ENCODE measurements at regions of chr4 and their contacts with region 1.

Region 1: DNA sequence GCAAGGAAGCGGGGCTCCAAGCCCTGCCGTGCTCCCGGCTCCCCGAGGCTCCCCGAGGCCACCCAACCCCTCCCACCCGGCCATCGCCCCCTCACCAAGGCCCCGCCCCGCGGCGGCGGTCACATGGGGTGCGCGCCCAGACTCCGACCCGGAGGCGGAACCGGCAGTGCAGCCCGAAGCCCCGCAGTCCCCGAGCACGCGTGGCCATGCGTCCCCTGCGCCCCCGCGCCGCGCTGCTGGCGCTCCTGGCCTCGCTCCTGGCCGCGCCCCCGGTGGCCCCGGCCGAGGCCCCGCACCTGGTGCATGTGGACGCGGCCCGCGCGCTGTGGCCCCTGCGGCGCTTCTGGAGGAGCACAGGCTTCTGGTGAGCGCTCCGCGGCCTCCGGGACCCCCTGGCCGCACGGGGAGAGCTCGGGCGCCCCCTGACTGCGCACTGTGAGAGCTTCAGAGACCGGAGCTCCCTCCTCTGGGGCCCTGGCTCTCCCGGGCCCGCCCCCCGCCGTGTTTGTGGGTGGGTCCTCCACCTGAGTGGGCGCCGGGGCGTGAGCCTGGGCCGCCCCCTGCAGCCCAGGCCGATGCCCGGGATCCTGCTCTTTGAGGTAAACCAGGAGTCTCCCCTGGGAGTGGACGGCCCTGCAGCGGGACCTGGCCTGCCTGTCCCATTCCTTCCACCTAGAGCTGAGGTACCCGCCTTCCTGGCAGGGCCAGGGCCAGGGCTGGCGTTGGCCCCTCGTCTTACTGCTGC is at the start of gene IDUA:
- DNase-seq: peak; percentile 92
- H3K4me3 Mint-ChIP-seq: peak within 1 kb of the TSS; percentile 83
- H3K27ac Mint-ChIP-seq: peak within 1 kb of the TSS; percentile 87
- H3K4me1 Mint-ChIP-seq: peaks cover 29% of the 10 kb centered on the region
- H3K27me3 Mint-ChIP-seq: no peaks in the 10 kb centered on the region

Region 2: GRCh38 chr4:742742-743311 is 244.2 kb before region 1 on chr4:
- CTCF ChIA-PET with region 1: interaction called, 18 read pairs
- DNase-seq: peak; percentile 83
- H3K4me3 Mint-ChIP-seq: no peak overlapping the region
- H3K27ac Mint-ChIP-seq: no peak overlapping the region
- H3K4me1 Mint-ChIP-seq: peaks cover 4% of the 10 kb centered on the region
- H3K27me3 Mint-ChIP-seq: no peaks in the 10 kb centered on the region

Region 3: GRCh38 chr4:973431-974397 is 13.3 kb before region 1 on chr4 and contains the start of gene DGKQ:
- CTCF ChIA-PET with region 1: no interaction called
- DNase-seq: peak; percentile 88
- H3K4me3 Mint-ChIP-seq: peak within 1 kb of the TSS; percentile 53
- H3K27ac Mint-ChIP-seq: no peak within 1 kb of the TSS
- H3K4me1 Mint-ChIP-seq: peaks cover 15% of the 10 kb centered on the region
- H3K27me3 Mint-ChIP-seq: peaks cover 10% of the 10 kb centered on the region

Measured in activated naive CD4-positive, alpha-beta T cell treated with anti-CD3 and anti-CD28 coated beads, Interleukin-2, amount 10 ng/mL, durations not matched to agents 7 days and 5 days (primary cell).